ENCODE measurements at regions of chr7 and their contacts with region 1.

Region 1: GRCh38 chr7:95608359-95609173 is 12.2 kb upstream of the PDK4 start:
- DNase-seq: peak; percentile 99
- H3K4me3 ChIP-seq: peak overlapping the region in 3 of 4 donors; percentile 16 to 30 (median 23)
- H3K27ac ChIP-seq: peak overlapping the region; percentile 83 to 95 (median 91)
- H3K4me1 ChIP-seq: peaks cover 0 to 53% (median 46%) of the 10 kb centered on the region in 4 donors
- H3K27me3 ChIP-seq: no peaks in the 10 kb centered on the region
- CTCF ChIP-seq: no peak
- EP300 ChIP-seq: peak; percentile 65 to 98 (median 96)
- POLR2A ChIP-seq: no peak

Region 2: GRCh38 chr7:95411036-95411435 is 197.5 kb before region 1 on chr7:
- intact Hi-C with region 1: no loop called
- DNase-seq: no peak
- H3K4me3 ChIP-seq: no peak overlapping the region
- H3K27ac ChIP-seq: no peak overlapping the region
- H3K4me1 ChIP-seq: peaks cover 0 to 4% (median 1%) of the 10 kb centered on the region in 4 donors
- H3K27me3 ChIP-seq: no peaks in the 10 kb centered on the region
- CTCF ChIP-seq: no peak
- EP300 ChIP-seq: no peak
- POLR2A ChIP-seq: no peak

Region 3: DNA sequence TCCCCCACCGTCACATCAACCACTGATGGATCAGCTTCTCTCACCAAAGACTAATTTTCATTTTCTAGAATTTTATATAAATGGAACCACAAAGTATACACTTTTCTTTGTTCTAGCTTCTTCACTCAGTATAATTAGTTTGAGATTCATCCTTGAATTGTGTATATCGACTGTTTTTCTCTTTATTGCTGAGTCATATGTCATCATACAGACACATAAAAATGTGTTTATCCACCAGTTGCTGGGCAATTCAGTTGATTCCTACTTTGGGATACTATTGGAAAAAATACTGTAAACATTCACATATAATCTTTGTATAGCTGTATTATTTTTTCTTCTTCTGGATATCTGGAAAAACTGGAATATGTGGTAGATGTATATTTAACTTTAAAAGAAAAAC is 38.8 kb before region 1 on chr7:
- intact Hi-C with region 1: no loop called
- DNase-seq: no peak
- H3K4me3 ChIP-seq: no peak overlapping the region
- H3K27ac ChIP-seq: no peak overlapping the region
- H3K4me1 ChIP-seq: no peaks in the 10 kb centered on the region
- H3K27me3 ChIP-seq: no peaks in the 10 kb centered on the region
- CTCF ChIP-seq: no peak
- EP300 ChIP-seq: no peak
- POLR2A ChIP-seq: no peak

Region 4: DNA sequence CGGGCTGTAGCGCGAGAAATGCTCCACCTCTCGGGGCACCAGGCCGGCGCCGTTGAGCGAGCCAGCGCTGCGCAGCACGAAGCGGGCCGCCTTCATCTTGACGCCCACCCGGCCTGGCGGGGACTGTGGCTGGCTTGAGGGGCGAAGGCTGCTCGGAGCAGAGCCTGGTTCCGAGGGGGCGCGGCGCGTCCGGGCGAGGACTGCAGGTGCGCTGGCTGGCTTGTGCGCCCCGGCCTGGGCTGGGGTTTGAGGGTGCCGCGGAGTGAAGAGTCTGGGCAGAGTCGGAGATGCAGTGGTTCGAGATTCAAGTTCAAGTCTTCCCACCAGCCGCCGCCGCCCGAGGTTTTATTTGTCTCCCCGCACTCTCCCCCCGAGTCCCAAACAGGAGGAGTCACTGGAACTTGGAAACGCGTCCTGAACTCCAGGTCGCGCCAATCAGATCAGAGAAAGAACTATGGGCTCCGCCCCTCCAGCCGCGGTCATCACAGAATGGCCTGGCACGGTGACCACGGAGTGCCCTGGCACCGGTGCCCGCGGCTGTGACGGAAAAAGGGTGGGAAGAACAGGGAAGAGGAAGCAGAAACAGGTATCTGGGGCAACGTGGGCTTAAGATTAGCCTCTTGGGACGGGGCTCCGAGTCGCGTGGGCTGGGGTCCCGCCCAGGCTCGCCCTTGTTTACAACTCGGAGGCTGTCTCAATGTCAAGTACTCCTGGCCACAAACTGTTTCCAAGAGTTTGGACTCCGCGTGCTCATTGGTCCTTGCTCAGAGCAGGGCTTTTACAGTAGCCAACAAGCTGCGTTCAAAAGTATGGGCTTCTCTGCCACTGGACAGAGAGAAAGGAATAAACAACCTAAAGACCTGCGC is 12.1 kb before region 1 on chr7 and contains the start of gene PDK4:
- intact Hi-C with region 1: loop called (anchors 1 kb)
- DNase-seq: peak; percentile 99
- H3K4me3 ChIP-seq: peak within 1 kb of the TSS; percentile 70 to 93 (median 83)
- H3K27ac ChIP-seq: peak within 1 kb of the TSS; percentile 92 to 99 (median 95)
- H3K4me1 ChIP-seq: peaks cover 0 to 39% (median 34%) of the 10 kb centered on the region in 4 donors
- H3K27me3 ChIP-seq: no peaks in the 10 kb centered on the region
- CTCF ChIP-seq: no peak
- EP300 ChIP-seq: peak; percentile 63 to 90 (median 78)
- POLR2A ChIP-seq: peak; percentile 79 to 84
- total RNA-seq, gene PDK4: 254 to 1,066 (median 595) TPM

Region 5: GRCh38 chr7:95628831-95629439 is 20.4 kb after region 1 on chr7:
- intact Hi-C with region 1: loop called (anchors 2 kb)
- DNase-seq: no peak
- H3K4me3 ChIP-seq: no peak overlapping the region
- H3K27ac ChIP-seq: peak overlapping the region; percentile 12 to 81 (median 76)
- H3K4me1 ChIP-seq: peaks cover 0 to 39% (median 37%) of the 10 kb centered on the region in 4 donors
- H3K27me3 ChIP-seq: no peaks in the 10 kb centered on the region
- CTCF ChIP-seq: peak in 1 of 4 experiments; percentile 23
- EP300 ChIP-seq: peak; percentile 86 to 98 (median 90)
- POLR2A ChIP-seq: no peak

Region 6: DNA sequence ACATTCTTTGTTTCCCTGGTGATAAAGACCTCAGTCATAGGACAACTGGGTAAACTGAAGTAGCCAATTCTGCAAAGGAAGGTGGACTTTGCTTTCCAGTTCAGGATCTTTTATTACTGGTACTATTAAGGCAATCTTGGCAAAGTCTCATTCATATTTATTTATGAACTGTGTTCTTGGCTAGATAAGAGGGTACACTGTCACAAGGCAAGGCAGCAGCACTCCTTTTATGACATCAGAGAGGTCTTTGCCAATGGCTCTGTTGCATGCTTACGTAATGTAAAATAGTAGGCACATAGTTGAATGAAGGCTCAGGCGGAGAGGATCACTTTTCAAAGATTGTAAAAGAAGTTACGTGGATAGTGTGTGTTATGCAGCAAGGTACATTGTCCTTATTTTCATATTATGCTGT is 51.5 kb after region 1 on chr7:
- intact Hi-C with region 1: loop called (anchors 2 kb)
- DNase-seq: no peak
- H3K4me3 ChIP-seq: no peak overlapping the region
- H3K27ac ChIP-seq: peak overlapping the region in 1 of 4 donors; percentile 32
- H3K4me1 ChIP-seq: peaks cover 0 to 10% (median 5%) of the 10 kb centered on the region in 4 donors
- H3K27me3 ChIP-seq: no peaks in the 10 kb centered on the region
- CTCF ChIP-seq: no peak
- EP300 ChIP-seq: peak; percentile 77 to 95 (median 92)
- POLR2A ChIP-seq: no peak

Region 7: DNA sequence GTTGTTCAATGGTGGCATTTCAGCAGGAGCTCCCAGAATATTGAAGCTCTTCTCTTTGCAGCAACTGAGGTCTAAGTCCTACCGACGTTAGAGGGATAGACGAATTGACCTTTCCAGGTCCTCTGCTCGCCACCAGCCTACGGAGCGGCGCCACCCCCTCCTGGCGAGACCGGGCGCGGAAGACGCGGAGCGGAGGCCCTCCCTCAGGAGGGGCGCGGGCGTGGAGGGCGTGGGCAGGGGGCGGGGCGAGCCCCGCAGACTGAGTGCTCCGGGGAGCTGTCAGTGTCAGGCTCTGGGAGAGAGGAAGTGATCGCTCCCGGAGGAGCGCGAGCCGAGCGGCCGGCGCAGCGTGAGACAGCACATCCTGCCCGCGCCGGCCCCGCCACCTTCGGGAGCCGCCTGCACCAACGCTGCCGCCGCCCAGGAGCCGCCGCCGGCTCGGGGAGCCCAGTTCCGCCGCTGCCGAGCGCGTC is 163.8 kb after region 1 on chr7 and contains the start of gene DYNC1I1:
- intact Hi-C with region 1: loop called (anchors 10 kb)
- DNase-seq: peak; percentile 88
- H3K4me3 ChIP-seq: peak within 1 kb of the TSS; percentile 71 to 92 (median 88)
- H3K27ac ChIP-seq: peak within 1 kb of the TSS; percentile 60 to 90 (median 88)
- H3K4me1 ChIP-seq: peaks cover 0 to 51% (median 28%) of the 10 kb centered on the region in 4 donors
- H3K27me3 ChIP-seq: no peaks in the 10 kb centered on the region
- CTCF ChIP-seq: no peak
- EP300 ChIP-seq: no peak
- POLR2A ChIP-seq: no peak
- total RNA-seq, gene DYNC1I1: 37.8 to 65.2 (median 56.6) TPM